ENCODE measurements at regions of chr1 and their contacts with region 1.

Region 1: GRCh38 chr1:983799-984473 is 2.0 kb upstream of the PERM1 start:
- DNase-seq: peak; percentile 59
- ATAC-seq: peak; percentile 57
- H3K4me3 ChIP-seq: peak overlapping the region; percentile 64
- H3K27ac ChIP-seq: no peak overlapping the region
- H3K4me1 ChIP-seq: peaks cover 19% of the 10 kb centered on the region
- H3K27me3 ChIP-seq: peaks cover 11% of the 10 kb centered on the region
- CTCF ChIP-seq: peak; percentile 89

Region 2: DNA sequence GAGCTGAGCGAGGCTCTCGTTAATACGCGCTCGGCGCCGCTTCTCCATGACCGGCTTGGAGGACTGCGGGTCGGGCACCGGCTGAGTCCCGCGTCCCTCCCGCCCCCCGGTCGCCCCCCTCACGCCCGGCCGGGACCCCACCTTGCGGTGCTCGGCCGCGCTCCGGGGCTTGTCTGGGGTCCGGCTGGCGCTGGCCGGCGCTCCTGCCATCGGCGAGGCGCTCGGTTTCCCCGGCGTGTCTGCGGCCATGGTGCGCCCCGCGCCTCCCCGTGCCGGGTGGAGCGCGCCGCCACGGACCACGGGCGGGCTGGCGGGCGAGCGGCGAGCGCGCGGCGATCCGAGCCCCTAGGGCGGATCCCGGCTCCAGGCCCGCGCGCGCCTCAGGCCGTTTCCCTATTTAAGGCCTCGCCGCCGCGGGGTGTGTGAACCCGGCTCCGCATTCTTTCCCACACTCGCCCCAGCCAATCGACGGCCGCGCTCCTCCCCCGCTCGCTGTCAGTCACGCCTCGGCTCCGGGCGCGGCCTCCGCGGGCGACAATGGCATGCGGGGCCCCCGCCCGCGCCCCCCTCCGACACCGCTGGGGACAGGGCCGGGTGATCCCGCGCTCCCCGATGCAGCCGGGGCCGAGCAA is 15.9 kb after region 1 on chr1 and contains the start of gene HES4:
- CTCF ChIA-PET with region 1: interaction called, 14 read pairs
- POLR2A ChIA-PET with region 1: no interaction called
- intact Hi-C with region 1: no loop called
- DNase-seq: peak; percentile 97
- ATAC-seq: peak; percentile 66
- H3K4me3 ChIP-seq: peak within 1 kb of the TSS; percentile 93
- H3K27ac ChIP-seq: peak within 1 kb of the TSS; percentile 96
- H3K4me1 ChIP-seq: peaks cover 4% of the 10 kb centered on the region; the same call in 1 of the 2 replicates
- H3K27me3 ChIP-seq: no peaks in the 10 kb centered on the region
- CTCF ChIP-seq: no peak
- total RNA-seq, gene HES4: 233 and 379 TPM in 2 replicates

Region 3: DNA sequence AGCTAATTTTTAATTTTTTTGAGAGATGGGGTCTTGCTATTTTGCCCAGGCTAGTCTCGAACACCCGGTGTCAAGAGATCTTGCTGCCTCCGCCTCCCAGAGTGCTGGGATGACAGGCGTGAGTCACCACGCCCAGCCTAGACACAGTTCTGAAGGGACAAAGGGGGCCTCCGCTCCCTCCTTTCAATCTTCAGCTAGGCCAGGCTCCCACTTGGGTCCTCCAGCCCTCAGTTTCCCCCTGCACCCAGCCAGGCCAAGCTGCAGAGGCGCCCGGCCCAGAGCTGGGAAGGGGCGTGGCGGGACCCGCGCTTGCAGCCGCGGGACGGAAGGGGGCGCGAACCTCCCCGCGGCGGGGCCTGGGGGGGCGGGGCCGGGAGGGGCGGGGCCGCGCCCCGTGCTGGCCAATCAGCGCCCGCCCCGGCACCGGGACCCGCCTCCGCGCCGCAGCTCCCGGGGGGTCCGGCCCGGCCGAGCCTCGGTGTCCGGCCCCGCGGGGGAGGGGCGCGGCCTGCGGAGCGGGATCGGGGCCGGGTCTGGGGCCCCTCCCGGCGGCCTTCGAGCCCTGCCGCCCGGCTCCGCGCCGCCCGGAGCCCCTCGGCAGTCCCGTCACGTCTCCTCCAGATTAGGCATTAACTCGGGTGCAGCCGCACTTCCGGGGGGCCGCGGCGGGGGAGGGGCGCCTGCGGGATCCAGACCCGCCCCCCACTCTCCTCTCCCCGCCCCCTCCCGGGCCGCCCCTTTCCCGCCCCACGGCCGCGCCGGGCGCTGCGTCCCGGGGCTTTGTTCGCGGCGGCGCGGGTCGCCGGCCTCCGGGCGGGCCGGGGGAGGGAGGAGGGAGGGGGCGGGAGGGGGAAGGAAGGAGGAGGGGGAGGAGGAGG is 35.4 kb after region 1 on chr1:
- CTCF ChIA-PET with region 1: interaction called, 10 read pairs
- POLR2A ChIA-PET with region 1: interaction called, 5 read pairs
- intact Hi-C with region 1: no loop called
- DNase-seq: peak; percentile 96
- ATAC-seq: peak; percentile 56
- H3K4me3 ChIP-seq: peak overlapping the region; percentile 37; the same call in 1 of the 2 replicates
- H3K27ac ChIP-seq: no peak overlapping the region
- H3K4me1 ChIP-seq: peaks cover 44% of the 10 kb centered on the region
- H3K27me3 ChIP-seq: no peaks in the 10 kb centered on the region
- CTCF ChIP-seq: peak; percentile 50

Region 4: DNA sequence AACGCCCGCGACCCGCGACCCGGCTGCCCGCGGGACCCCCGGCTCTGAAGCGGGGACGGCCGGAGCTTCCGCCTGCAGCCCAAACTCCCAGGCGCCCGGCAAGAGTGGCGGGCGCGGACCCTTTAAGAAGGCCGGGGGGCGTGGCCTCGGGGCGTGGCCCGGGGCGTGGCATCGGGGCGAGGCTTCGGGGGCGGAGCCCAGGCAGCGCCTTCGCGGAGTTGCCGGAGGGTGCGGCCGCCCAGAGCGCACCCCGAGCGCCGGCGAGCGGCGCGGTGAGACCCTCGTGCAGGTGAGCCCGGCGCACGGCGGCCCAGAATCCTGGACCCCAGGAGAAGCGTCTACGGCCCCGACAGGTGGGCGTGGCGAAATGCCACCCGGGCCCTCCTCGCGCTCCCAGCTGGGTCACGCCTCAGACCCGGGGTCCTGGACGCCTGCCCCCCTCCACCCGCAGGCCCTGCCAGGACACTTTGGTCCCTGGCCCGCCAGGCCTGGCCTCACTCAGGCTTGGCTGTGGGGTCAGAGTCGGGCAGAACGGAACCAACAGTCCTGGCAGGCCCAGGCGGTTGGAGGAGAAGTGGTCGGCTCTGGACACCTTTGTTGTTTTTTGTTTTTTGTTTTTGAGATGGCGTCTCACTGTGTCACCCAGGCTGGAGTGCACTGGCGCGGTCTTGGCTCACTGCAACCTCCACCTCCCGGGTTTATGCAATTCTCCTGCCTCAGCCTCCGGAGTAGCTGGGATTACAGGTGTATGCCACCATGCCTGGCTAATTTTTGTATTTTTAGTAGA is 75.8 kb after region 1 on chr1:
- CTCF ChIA-PET with region 1: interaction called, 23 read pairs
- POLR2A ChIA-PET with region 1: no interaction called
- intact Hi-C with region 1: loop called (anchors 2 kb)
- DNase-seq: peak; percentile 97
- ATAC-seq: peak; percentile 55
- H3K4me3 ChIP-seq: peak overlapping the region; percentile 85
- H3K27ac ChIP-seq: no peak overlapping the region
- H3K4me1 ChIP-seq: peaks cover 52% of the 10 kb centered on the region
- H3K27me3 ChIP-seq: no peaks in the 10 kb centered on the region
- CTCF ChIP-seq: no peak

Region 5: GRCh38 chr1:1273512-1274298 is 289.8 kb after region 1 on chr1 and contains the start of gene UBE2J2:
- CTCF ChIA-PET with region 1: no interaction called
- POLR2A ChIA-PET with region 1: interaction called, 11 read pairs
- intact Hi-C with region 1: no loop called
- DNase-seq: peak; percentile 91
- ATAC-seq: peak; percentile 80
- H3K4me3 ChIP-seq: peak within 1 kb of the TSS; percentile 96
- H3K27ac ChIP-seq: peak within 1 kb of the TSS; percentile 90
- H3K4me1 ChIP-seq: peaks cover 29% of the 10 kb centered on the region
- H3K27me3 ChIP-seq: no peaks in the 10 kb centered on the region
- CTCF ChIP-seq: no peak
- total RNA-seq, gene UBE2J2: 182 and 200 TPM in 2 replicates

Region 6: DNA sequence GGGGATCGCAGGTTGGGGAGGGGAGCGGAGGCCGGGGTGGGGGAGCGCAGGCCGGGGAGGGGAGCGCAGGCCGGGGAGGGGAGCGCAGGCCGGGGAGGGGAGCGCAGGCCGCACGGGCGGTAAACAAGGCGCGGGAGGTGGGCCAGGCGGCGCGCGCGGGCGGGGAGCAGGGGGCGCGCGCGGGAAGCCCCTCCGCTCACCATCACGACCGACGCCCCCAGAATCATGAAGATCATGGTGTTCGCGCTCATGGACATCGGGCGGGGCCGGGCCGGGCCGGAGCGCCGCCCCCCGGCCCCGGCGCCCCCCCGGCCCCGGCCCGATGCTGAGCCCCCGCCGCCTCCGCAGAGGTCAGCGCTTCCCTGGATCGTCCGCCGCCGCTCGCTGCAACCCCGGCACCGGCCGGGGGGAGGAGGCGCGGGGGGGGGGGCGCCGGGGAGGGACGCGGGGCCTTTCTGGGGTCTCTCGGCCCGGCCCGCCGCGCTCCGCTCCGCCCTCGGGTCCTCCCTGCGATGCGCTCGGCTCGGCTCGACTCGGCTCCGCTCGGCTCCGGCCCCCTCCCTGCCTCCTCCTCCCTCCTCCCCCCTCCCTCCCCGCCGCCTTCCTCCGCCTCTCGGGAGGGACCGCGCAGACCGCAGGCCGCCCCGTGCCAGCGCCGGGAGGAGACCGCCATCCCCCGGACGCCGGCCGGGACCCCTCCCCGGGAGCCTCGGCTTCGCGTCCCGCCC is 556.3 kb after region 1 on chr1 and contains the start of gene TMEM240:
- CTCF ChIA-PET with region 1: no interaction called
- POLR2A ChIA-PET with region 1: no interaction called
- intact Hi-C with region 1: no loop called
- DNase-seq: no peak
- ATAC-seq: peak; percentile 39
- H3K4me3 ChIP-seq: no peak within 1 kb of the TSS
- H3K27ac ChIP-seq: no peak within 1 kb of the TSS
- H3K4me1 ChIP-seq: no peaks in the 10 kb centered on the region
- H3K27me3 ChIP-seq: no peaks in the 10 kb centered on the region
- CTCF ChIP-seq: no peak
- total RNA-seq, gene TMEM240: 0.87 and 2.0 TPM in 2 replicates